Calu3 (cell line): ENCODE measurements at regions of chr9 and their contacts with region 1.

Region 1: DNA sequence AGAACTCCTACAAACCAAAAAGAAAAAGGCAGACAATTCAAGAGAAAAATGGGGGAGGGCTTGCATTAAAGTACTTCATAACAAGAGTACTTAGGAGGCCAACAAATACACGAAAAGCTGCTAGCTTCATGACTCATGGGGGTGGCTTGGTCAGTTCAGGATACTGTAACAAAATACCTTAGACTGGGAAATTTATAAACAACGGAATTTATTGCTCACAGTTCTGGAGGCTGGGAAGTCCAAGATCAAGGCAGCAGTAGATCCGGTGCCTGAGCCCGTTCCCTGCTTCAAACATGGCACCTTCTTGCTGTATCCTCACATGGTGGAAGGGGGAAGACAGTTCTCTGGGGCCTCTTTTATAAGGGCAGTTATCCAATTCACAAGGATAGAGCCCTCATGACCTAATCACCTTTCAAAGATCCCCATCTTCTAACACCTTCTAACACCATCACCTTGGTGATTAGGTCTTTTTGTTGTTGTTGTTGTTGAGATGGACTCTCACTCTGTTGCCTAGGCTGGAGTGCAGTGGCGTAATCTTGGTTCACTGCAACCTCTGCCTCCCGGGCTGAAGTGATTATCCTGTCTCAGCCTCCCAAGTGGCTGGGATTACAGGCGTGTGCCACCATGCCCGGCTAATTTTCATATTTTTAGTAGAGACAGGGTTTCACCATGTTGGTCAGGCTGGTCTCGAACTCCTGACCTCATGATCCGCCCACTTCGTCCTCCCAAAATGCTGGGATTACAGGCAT is 111.2 kb downstream of the C9orf50 start:
- DNase-seq: no peak
- H3K4me3 Mint-ChIP-seq: no peak overlapping the region
- H3K27ac Mint-ChIP-seq: no peak overlapping the region
- H3K4me1 Mint-ChIP-seq: peaks cover 4% of the 10 kb centered on the region
- H3K27me3 Mint-ChIP-seq: no peaks in the 10 kb centered on the region
- CTCF ChIP-seq: no peak

Region 2: GRCh38 chr9:129561594-129562281 is 52.0 kb after region 1 on chr9:
- CTCF ChIA-PET with region 1: no interaction called
- intact Hi-C with region 1: loop called (anchors 5 kb)
- DNase-seq: no peak
- H3K4me3 Mint-ChIP-seq: no peak overlapping the region
- H3K27ac Mint-ChIP-seq: no peak overlapping the region
- H3K4me1 Mint-ChIP-seq: peaks cover 28% of the 10 kb centered on the region
- H3K27me3 Mint-ChIP-seq: no peaks in the 10 kb centered on the region
- CTCF ChIP-seq: no peak

Region 3: GRCh38 chr9:129737479-129738274 is 228.0 kb after region 1 on chr9:
- CTCF ChIA-PET with region 1: no interaction called
- intact Hi-C with region 1: no loop called
- DNase-seq: peak; percentile 83
- H3K4me3 Mint-ChIP-seq: peak overlapping the region; percentile 58
- H3K27ac Mint-ChIP-seq: no peak overlapping the region
- H3K4me1 Mint-ChIP-seq: no peaks in the 10 kb centered on the region
- H3K27me3 Mint-ChIP-seq: peaks cover 4% of the 10 kb centered on the region
- CTCF ChIP-seq: peak; percentile 90

Region 4: GRCh38 chr9:129811967-129812363 is 302.3 kb after region 1 on chr9:
- CTCF ChIA-PET with region 1: no interaction called
- intact Hi-C with region 1: no loop called
- DNase-seq: no peak
- H3K4me3 Mint-ChIP-seq: no peak overlapping the region
- H3K27ac Mint-ChIP-seq: no peak overlapping the region
- H3K4me1 Mint-ChIP-seq: no peaks in the 10 kb centered on the region
- H3K27me3 Mint-ChIP-seq: no peaks in the 10 kb centered on the region
- CTCF ChIP-seq: no peak